Activated CD8-positive, alpha-beta T cell treated with anti-CD3 and anti-CD28 coated beads for 36 hours (primary cell): ENCODE measurements at regions of chr6 and their contacts with region 1.

Region 1: DNA sequence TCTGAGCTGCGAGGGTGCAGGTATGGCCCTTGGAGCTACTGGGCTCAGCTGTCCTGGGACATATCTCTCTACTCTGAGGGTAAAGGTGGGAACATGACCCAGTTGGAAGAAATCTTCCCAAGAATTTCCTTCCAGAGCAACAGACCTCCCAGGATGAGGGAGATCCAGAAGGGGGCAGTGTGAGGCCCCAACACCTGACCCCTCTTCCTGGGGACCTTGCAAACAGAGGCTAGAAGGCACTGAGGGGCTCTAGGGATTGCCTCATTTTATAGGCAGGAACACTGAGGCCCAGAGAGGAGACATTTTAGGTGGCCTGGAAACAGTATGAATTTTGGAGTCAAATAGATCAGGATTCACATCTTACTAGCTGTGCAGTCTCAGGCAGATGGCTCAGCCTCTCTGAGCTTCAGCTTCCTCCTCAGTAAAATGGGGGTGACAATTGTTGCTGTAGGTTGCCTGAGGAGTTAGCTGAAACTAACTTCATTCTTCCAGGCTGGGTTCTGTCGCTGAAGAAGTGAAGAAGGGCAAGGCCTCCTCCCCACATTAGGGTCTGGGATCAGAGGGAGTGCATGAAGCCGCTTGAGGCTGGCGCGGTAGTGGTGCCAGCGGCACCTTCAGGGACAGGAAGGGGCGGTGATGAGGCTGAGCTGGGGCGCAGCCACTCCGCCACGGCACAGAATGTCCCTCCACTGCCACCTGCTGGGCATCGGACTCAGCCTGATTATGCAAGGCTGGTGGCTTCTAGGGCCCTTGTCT is 11.4 kb downstream of the KCNK17 start:
- DNase-seq: peak; percentile 96
- ATAC-seq: peak; percentile 99
- H3K4me3 Mint-ChIP-seq: peak overlapping the region; percentile 44
- H3K27ac Mint-ChIP-seq: peak overlapping the region; percentile 60
- H3K4me1 Mint-ChIP-seq: peaks cover 4% of the 10 kb centered on the region
- H3K27me3 Mint-ChIP-seq: no peaks in the 10 kb centered on the region
- CTCF ChIP-seq: peak; percentile 90

Region 2: GRCh38 chr6:38973178-38974054 is 329.4 kb before region 1 on chr6:
- CTCF ChIA-PET with region 1: interaction called, 39 read pairs
- POLR2A ChIA-PET with region 1: no interaction called
- intact Hi-C with region 1: no loop called
- DNase-seq: peak; percentile 51
- ATAC-seq: peak; percentile 97
- H3K4me3 Mint-ChIP-seq: no peak overlapping the region
- H3K27ac Mint-ChIP-seq: no peak overlapping the region
- H3K4me1 Mint-ChIP-seq: peaks cover 2% of the 10 kb centered on the region
- H3K27me3 Mint-ChIP-seq: peaks cover 13% of the 10 kb centered on the region
- CTCF ChIP-seq: peak; percentile 68

Region 3: GRCh38 chr6:39088331-39088730 is 214.5 kb before region 1 on chr6:
- CTCF ChIA-PET with region 1: interaction called, 10 read pairs
- POLR2A ChIA-PET with region 1: no interaction called
- intact Hi-C with region 1: no loop called
- DNase-seq: peak; percentile 61
- ATAC-seq: peak; percentile 38
- H3K4me3 Mint-ChIP-seq: no peak overlapping the region
- H3K27ac Mint-ChIP-seq: no peak overlapping the region
- H3K4me1 Mint-ChIP-seq: peaks cover 21% of the 10 kb centered on the region
- H3K27me3 Mint-ChIP-seq: peaks cover 49% of the 10 kb centered on the region
- CTCF ChIP-seq: no peak

Region 4: DNA sequence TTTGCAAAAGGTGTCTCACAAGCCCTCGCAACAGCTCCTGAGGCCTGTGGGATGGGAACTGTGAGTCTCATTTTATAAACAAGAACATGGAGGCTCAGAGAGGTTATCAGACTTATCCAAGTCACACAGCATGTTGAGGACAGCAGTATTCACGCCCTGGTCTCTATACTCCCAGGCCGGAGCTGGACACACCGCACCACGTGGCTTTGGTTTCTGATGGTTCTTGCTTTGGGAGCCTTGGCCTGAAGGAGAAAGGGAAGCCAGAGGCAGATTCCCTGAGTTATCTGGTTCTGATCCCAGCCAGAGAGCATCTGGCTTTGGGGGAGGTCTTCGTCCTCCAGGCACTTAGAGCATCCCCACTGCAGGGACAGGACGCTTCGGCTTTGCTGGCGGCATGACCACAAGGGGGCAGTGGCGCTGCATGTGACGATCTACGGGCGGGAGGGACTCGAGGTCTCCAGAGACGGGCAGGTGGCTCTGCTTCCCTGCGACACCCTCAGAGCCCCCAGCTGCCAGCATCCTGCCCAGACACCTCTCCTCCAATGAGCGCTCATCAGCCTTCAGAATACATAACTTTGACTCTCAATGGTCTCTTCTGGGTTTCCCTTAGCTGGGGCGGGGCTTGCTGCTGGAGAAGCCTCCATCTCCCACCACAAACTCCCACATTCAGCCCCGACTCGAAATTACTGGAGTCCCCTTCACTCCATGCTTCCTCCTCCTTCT is 136.5 kb before region 1 on chr6:
- CTCF ChIA-PET with region 1: interaction called, 321 read pairs
- POLR2A ChIA-PET with region 1: no interaction called
- intact Hi-C with region 1: loop called (anchors 1 kb)
- DNase-seq: peak; percentile 90
- ATAC-seq: peak; percentile 97
- H3K4me3 Mint-ChIP-seq: no peak overlapping the region
- H3K27ac Mint-ChIP-seq: no peak overlapping the region
- H3K4me1 Mint-ChIP-seq: peaks cover 8% of the 10 kb centered on the region
- H3K27me3 Mint-ChIP-seq: no peaks in the 10 kb centered on the region
- CTCF ChIP-seq: peak; percentile 91

Region 5: GRCh38 chr6:39189915-39190544 is 112.8 kb before region 1 on chr6:
- CTCF ChIA-PET with region 1: interaction called, 15 read pairs
- POLR2A ChIA-PET with region 1: interaction called, 3 read pairs
- intact Hi-C with region 1: no loop called
- DNase-seq: peak; percentile 37
- ATAC-seq: peak; percentile 70
- H3K4me3 Mint-ChIP-seq: no peak overlapping the region
- H3K27ac Mint-ChIP-seq: no peak overlapping the region
- H3K4me1 Mint-ChIP-seq: peaks cover 14% of the 10 kb centered on the region
- H3K27me3 Mint-ChIP-seq: no peaks in the 10 kb centered on the region
- CTCF ChIP-seq: no peak

Region 6: DNA sequence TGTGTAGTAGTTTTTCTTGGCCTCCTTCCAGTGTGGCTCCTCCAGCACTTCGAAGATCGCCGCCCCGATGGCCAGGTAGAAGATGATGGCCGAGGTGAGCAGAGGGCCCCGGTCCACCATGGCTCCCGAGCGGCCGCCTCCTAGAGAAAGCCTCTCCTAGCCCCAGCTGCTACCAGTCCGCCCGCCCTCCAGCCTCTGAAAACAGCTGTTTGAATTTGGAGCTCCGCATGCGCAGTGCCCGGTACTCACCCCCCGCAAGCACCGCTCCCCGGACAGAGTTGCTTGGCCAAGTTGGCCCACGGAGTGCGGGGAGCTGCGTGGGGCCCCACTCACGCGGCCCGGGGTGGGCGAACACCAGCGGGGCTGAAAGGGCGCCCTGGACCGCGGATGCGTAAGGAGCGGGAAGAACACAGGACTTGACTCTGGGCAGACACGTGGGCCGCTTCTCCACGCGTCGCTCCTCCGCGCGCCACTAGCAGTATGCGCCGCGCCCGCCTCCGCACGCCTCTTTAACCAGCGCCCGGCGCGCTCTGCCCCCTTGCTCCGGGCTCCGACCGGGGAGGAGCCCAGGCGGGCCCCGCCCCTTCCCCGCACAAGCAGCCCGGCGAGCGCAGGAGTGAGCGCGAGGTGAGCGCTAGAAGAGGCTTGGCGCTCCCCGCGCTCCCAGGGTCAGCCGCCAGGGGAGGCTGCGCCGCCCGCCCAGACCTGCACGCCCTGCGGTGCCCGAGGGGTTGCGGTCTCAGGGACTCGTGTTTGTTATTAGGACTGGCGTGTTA is 73.7 kb before region 1 on chr6 and contains the start of gene KCNK5:
- CTCF ChIA-PET with region 1: interaction called, 21 read pairs
- POLR2A ChIA-PET with region 1: interaction called, 4 read pairs
- intact Hi-C with region 1: loop called (anchors 10 kb)
- DNase-seq: peak; percentile 93
- ATAC-seq: peak; percentile 94
- H3K4me3 Mint-ChIP-seq: peak within 1 kb of the TSS; percentile 90
- H3K27ac Mint-ChIP-seq: peak within 1 kb of the TSS; percentile 94
- H3K4me1 Mint-ChIP-seq: peaks cover 35% of the 10 kb centered on the region
- H3K27me3 Mint-ChIP-seq: no peaks in the 10 kb centered on the region
- CTCF ChIP-seq: peak; percentile 85
- total RNA-seq, gene KCNK5: 25.0 to 25.9 TPM

Region 7: DNA sequence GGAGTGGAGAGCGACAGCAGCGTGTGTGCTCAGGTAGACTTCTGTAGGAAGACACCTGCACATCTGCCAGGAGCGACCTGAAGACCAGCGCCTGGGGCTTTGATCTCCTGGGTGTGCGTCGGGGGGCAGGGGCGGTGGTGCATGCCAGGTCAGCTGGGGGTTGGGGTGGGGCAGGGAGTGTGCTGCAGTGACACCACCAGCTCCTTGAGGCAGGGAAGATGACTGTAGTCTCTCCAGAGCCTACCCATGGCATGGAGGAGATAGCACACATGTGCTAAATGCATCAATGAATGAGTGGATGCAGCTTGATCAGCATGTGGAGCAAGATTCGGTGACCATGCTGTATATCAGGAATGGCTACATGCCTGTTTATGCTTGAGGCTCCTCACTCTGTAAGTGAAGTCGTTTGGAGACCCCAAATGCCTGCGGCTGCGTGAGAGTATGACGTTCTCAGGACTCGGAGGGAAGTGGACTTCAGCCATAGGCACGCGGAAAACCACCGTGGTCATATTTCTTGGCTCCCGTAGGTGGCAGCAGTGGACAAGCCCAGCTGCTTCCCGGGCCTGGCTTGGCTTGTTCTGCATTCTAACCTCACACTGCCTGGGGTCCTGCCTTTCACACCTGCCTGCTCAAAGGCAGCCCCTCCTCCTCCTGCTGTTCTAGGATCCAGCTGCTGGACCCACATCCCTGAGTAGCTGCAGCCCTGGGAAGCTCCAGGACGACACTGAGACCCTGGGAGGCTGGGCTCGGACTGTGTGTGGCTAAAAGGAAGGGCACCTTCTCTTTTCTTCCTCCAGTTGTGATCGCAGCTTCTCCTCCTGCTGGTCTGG is 59.0 kb after region 1 on chr6:
- CTCF ChIA-PET with region 1: no interaction called
- POLR2A ChIA-PET with region 1: no interaction called
- intact Hi-C with region 1: no loop called
- DNase-seq: peak; percentile 61
- ATAC-seq: peak; percentile 77
- H3K4me3 Mint-ChIP-seq: no peak overlapping the region
- H3K27ac Mint-ChIP-seq: no peak overlapping the region
- H3K4me1 Mint-ChIP-seq: peaks cover 3% of the 10 kb centered on the region
- H3K27me3 Mint-ChIP-seq: peaks cover 2% of the 10 kb centered on the region
- CTCF ChIP-seq: peak; percentile 85